ENCODE measurements at regions of chr3 and their contacts with region 1.

Region 1: GRCh38 chr3:128170805-128171516 is 17.7 kb downstream of the EEFSEC start:
- DNase-seq: peak; percentile 80 to 95 (median 82)
- H3K4me3 ChIP-seq: no peak overlapping the region
- H3K27ac ChIP-seq: no peak overlapping the region
- H3K4me1 ChIP-seq: peaks cover 4 to 23% (median 6%) of the 10 kb centered on the region in 3 donors
- H3K27me3 ChIP-seq: no peaks in the 10 kb centered on the region
- CTCF ChIP-seq: peak; percentile 87

Region 2: GRCh38 chr3:128497387-128498126 is 326.6 kb after region 1 on chr3:
- intact Hi-C with region 1: loop called (anchors 10 kb)
- DNase-seq: peak; percentile 76 to 91 (median 87)
- H3K4me3 ChIP-seq: peak overlapping the region; percentile 1 to 55 (median 42)
- H3K27ac ChIP-seq: no peak overlapping the region
- H3K4me1 ChIP-seq: peaks cover 0 to 9% (median 0%) of the 10 kb centered on the region in 3 donors
- H3K27me3 ChIP-seq: peaks cover 25% of the 10 kb centered on the region
- CTCF ChIP-seq: peak; percentile 54

Region 3: DNA sequence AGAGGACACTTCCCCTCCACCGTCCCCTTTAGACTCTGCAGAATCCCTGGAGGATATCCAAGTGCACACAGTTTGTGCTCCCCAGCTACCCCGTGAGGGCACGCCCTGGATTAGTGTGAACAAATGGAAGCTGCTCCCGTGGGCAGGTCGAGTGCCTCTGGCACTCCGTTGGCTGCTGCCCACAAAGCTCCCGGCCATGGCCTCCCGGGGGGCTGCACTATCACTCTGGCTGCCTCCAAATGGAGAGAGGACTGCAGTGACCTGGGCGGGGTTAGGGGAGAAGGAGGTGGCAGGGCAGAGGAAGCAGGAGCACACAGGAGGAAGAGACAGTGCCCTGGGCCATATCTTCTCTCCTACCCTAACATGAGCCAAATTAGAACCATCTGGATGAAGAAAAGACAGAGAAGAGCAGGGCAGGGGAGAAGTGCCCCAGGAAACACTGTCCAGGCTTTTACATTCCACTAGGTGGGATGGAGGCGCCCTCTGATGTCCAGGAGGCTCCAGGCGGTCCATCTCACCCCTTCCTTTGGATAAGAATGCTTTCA is 679.0 kb after region 1 on chr3:
- intact Hi-C with region 1: no loop called
- DNase-seq: no peak
- H3K4me3 ChIP-seq: no peak overlapping the region
- H3K27ac ChIP-seq: no peak overlapping the region
- H3K4me1 ChIP-seq: no peaks in the 10 kb centered on the region
- H3K27me3 ChIP-seq: no peaks in the 10 kb centered on the region
- CTCF ChIP-seq: no peak

Measured in kidney (tissue), 22 donors.